ENCODE measurements at regions of chr10 and their contacts with region 1.

Region 1: DNA sequence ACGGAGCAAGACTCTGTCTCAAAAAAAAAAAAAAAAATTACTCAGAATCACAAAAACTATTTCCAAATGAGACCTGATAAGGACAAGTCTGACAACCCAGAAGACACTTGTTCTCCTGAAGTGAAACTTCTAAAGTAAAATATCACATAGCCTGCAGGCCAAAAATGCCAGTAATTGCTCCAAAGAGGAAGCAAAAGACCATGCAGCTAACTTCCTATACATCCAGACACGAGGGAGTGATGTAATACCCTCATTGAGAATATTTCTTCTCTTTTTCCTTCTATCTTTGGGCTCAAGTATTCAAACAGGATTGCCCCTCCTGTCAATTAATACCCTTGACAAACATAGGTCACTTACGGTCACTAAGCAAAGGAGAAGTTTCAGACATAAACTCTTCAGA is 31.2 kb downstream of the ARMH3 start:
- DNase-seq: no peak
- H3K4me3 ChIP-seq: no peak overlapping the region
- H3K27ac ChIP-seq: no peak overlapping the region
- H3K4me1 ChIP-seq: no peaks in the 10 kb centered on the region
- H3K27me3 ChIP-seq: no peaks in the 10 kb centered on the region
- CTCF ChIP-seq: no peak

Region 2: GRCh38 chr10:101629837-101630632 is 394.8 kb before region 1 on chr10:
- CTCF ChIA-PET with region 1: no interaction called
- POLR2A ChIA-PET with region 1: no interaction called
- intact Hi-C with region 1: no loop called
- DNase-seq: no peak
- H3K4me3 ChIP-seq: no peak overlapping the region
- H3K27ac ChIP-seq: no peak overlapping the region
- H3K4me1 ChIP-seq: no peaks in the 10 kb centered on the region
- H3K27me3 ChIP-seq: no peaks in the 10 kb centered on the region
- CTCF ChIP-seq: no peak

Region 3: DNA sequence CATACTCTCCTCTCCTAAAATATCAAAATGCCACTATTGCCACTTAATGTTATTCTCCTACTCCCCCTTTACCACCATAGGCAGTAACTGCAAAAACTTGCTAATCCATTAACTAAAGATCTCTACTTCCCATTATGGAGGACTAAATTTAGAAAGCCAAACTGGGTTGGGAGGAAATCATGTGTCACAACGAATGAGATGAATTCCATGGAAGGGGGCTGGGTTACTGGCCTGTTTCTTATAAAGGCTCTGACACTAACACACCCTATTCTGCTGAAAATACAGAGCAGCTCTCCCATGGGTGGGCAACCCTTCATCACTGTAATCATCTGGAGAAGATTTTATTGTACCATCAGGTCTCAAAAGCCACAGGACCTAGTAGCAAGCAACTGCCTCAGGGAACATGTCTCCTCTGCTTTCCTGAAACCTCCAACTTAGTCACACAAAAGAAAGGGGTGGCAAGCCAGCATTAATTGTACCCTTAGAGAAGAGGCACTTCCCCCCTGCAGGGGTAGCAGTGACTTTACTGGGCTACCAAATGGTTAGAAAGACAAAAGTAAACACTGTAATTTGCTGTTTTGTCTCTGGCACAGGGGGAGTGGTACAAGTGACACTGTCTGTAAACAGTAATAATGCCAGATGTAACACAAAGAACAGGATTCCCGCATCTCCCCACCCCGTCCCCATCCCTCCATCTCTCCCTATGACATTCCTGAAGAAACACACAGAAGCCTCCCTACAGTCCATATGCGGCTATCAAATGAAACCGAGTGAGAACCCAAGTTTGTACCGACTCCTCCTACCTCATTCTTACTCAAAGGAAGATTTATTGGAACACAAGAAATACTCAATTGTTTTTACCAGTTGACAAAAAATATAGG is 50.5 kb before region 1 on chr10:
- CTCF ChIA-PET with region 1: no interaction called
- POLR2A ChIA-PET with region 1: no interaction called
- intact Hi-C with region 1: loop called (anchors 10 kb)
- DNase-seq: no peak
- H3K4me3 ChIP-seq: no peak overlapping the region
- H3K27ac ChIP-seq: no peak overlapping the region
- H3K4me1 ChIP-seq: peaks cover 6% of the 10 kb centered on the region
- H3K27me3 ChIP-seq: no peaks in the 10 kb centered on the region
- CTCF ChIP-seq: no peak

Region 4: DNA sequence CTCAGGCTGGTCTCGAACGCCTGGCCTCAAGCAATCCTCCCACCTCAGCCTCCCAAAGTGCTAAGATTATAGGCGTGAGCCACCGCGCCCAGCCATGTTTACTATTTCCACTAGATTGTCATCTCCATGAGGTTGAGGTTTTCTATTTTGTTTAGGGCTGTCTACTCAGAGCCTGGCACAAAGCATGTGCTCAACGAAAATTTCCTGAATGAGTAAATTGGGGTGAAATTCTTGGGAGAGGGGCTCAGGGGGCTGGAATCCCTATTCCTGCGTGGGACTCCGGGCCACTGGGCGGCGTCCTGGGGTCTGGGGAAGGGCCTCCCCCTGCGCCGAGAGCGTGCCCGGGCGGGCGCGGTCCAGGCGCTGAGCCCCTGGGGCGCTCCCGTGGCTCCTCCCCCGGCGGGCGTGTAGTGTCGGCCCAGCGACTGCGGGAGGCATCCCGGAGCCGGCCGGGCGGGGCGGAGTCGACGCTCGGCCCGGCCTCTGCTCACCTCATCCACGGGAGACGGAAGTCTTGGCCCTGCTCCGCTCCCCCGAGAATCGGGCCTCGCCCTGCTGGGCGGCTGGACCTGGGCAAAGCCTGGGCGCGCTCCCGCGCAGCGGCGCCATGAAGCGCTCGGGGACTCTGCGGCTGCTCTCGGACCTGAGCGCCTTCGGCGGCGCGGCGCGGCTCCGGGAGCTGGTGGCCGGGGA is 40.2 kb after region 1 on chr10 and contains the start of gene HPS6:
- CTCF ChIA-PET with region 1: no interaction called
- POLR2A ChIA-PET with region 1: interaction called, 10 read pairs
- intact Hi-C with region 1: no loop called
- DNase-seq: peak; percentile 91
- H3K4me3 ChIP-seq: peak within 1 kb of the TSS; percentile 89
- H3K27ac ChIP-seq: peak within 1 kb of the TSS; percentile 80
- H3K4me1 ChIP-seq: peaks cover 9% of the 10 kb centered on the region
- H3K27me3 ChIP-seq: no peaks in the 10 kb centered on the region
- CTCF ChIP-seq: peak; percentile 25; the same call in 1 of the 2 replicates
- total RNA-seq, gene HPS6: 12.6 and 15.7 TPM in 2 replicates